GM10248 (cell line): ENCODE measurements at regions of chr2 and their contacts with region 1.

Region 1: GRCh38 chr2:134693359-134694330 is 25.2 kb downstream of the TMEM163 start:
- DNase-seq: no peak
- CTCF ChIP-seq: no peak

Region 2: DNA sequence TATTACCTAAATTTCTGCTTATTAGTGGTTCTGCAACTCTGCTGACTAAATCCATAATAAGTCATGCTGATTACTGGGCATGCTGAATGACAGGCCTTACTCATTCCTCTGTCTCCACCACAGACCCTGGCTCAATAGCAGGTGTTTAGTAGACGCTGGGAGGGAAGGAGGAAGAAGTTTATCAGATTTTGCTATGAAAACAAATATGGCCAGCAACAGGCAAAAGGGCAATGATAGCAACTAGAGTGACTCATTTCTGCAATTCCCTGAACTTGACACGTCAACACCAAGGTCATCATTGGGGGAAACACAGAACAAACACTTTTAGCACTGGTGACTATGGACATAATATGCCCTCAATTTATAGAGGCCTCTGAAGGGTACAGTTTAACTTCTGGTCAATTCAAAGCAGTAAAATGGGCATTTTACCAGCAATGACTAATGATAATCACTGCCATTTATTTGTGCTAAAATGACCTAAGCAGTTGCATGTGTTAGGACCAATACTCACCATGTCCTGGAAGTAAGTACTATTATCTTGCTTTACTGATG is 10.0 kb before region 1 on chr2:
- CTCF ChIA-PET with region 1: interaction called, 23 read pairs
- POLR2A ChIA-PET with region 1: no interaction called
- DNase-seq: peak; percentile 26
- CTCF ChIP-seq: no peak

Region 3: DNA sequence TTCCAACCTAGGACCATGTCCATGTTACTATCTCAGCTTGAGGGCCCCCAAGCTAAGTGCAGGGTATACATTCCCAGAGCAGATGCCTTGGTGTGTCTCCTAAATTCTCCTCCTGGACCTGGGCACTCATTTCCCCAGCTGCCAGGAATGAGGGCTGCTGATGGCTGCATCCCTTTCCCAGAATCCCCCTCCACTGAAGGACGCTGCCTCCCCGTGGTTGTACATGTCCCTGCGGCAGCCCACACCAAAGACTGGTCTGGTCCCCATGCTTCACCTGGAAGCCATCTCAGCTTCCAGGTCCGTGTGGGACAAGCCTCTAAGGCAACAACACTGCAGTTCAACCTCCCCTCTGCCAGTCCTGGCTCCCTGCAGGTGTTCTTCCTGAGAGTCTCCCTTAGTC is 10.5 kb after region 1 on chr2:
- CTCF ChIA-PET with region 1: interaction called, 11 read pairs
- POLR2A ChIA-PET with region 1: no interaction called
- DNase-seq: no peak
- CTCF ChIP-seq: no peak

Region 4: DNA sequence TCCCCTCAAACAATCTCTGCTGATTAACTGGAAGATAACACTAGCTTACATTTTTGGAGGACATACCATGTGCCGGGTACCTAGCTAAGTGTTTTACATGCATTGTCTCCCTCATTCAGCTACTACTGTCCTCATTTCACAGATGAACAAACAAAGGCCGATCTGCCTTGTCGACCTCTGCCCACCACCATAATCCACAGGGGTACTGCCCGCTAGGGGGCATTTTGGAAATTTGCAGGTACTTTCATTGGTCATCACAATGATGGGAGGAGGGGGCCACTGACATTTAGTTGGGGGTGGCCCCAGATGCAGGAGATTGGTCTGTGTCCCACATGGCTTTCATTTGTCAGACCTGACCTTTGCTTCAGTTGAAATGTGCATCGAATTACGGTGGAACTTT is 29.1 kb after region 1 on chr2:
- CTCF ChIA-PET with region 1: no interaction called
- POLR2A ChIA-PET with region 1: no interaction called
- DNase-seq: no peak
- CTCF ChIP-seq: peak; percentile 19